Dorsolateral prefrontal cortex (tissue), 120 donors: ENCODE measurements at regions of chr20 and their contacts with region 1.

Region 1: GRCh38 chr20:63381807-63382322 is 20.7 kb upstream of the CHRNA4 start:
- DNase-seq: no peak
- H3K4me3 ChIP-seq: peak overlapping the region in 33 of 59 donors; percentile 9 to 48 (median 32)
- H3K27ac ChIP-seq: no peak overlapping the region
- H3K27me3 ChIP-seq: peaks cover 0 to 8% (median 0%) of the 10 kb centered on the region in 45 donors
- CTCF ChIP-seq: peak; percentile 75 to 99 (median 94)

Region 2: GRCh38 chr20:63223221-63224207 is 158.4 kb before region 1 on chr20:
- intact Hi-C with region 1: loop called (anchors 1 to 2 kb)
- DNase-seq: peak in 2 of 10 donors; percentile 27 to 44
- H3K4me3 ChIP-seq: no peak overlapping the region
- H3K27ac ChIP-seq: no peak overlapping the region
- H3K27me3 ChIP-seq: no peaks in the 10 kb centered on the region
- CTCF ChIP-seq: peak; percentile 35 to 86 (median 72)

Region 3: DNA sequence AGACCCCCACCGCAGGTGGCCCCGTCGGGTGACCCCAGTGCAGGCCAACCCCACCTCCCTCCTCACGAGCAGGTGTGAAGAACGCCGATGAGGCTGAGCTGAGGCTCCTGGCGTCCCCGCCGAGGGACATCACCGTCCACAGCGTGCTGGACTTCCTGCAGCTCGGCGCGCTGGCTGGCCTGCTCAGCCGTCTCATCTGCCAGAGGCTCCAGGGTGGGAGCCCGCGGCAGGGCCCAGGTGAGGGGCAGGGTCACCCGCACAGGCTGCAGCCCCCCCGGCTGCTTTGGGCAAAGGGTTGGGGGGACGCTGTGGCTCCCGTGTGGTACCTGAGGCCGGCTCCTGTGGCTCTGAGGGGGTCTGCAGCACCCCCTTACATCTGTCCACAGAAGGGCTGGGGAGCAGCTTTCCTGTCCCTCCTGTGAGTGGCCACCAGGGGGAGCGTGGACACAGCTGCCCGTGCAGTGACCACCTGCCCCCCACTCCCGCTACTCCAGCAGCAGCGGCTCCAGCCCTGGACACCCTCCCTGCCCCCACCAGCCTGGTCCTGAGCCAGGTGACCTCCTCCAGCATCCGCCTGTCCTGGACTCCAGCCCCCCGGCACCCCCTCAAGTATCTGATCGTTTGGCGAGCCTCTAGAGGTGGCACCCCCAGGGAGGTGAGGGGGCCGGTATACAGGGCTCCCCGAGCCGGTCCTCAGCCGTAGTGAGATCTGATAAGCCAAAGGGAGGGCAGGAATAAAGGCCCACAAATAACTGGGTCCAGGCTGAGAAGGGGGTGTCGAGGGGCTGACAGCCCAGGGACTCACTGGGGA is 72.4 kb before region 1 on chr20:
- intact Hi-C with region 1: loop called (anchors 1 kb)
- DNase-seq: peak in 7 of 10 donors; percentile 40 to 69 (median 53)
- H3K4me3 ChIP-seq: no peak overlapping the region
- H3K27ac ChIP-seq: peak overlapping the region in 1 of 59 donors; percentile 2
- H3K27me3 ChIP-seq: peaks cover 0 to 42% (median 13%) of the 10 kb centered on the region in 45 donors
- CTCF ChIP-seq: peak; percentile 53 to 96 (median 88)